Activated CD4-positive, alpha-beta memory T cell treated with anti-CD3 and anti-CD28 coated beads for 36 hours (primary cell): ENCODE measurements at regions of chr19 and their contacts with region 1.

Region 1: DNA sequence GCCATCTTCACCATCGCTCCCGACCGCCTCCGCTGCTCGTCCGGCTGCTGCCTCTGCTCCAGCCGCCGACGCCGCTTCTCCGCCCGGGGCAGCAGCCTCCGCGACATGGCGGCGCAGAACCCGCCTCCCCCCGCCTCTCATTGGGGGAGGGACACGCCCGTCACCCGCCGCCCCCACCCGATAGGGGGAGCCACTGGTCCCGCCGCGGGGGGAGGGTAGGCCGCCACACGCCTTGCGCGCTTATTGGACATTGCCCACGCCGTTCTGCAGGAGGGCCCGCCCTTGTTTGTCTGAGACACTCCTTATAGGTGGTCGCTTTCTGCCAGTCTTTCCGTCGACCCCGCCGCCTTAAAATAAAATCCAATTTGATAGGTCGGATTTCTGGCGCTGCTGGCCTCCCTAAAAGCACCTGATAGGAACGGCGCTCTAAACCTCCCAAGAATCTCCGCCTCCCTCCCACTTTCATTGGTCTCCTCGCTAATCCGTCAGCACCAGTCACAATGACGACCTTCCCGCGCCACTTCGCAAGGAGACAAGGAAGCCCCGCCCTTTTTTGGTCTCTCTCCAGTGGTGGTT is at the start of gene HNRNPL:
- DNase-seq: peak; percentile 99
- H3K4me3 Mint-ChIP-seq: peak within 1 kb of the TSS; percentile 97
- H3K27ac Mint-ChIP-seq: peak within 1 kb of the TSS; percentile 97
- H3K4me1 Mint-ChIP-seq: peaks cover 41% of the 10 kb centered on the region
- H3K27me3 Mint-ChIP-seq: no peaks in the 10 kb centered on the region
- total RNA-seq, gene HNRNPL: 646 to 671 TPM

Region 2: GRCh38 chr19:38647368-38647965 is 202.5 kb before region 1 on chr19 and contains the start of gene ACTN4:
- CTCF ChIA-PET with region 1: no interaction called
- POLR2A ChIA-PET with region 1: no interaction called
- intact Hi-C with region 1: loop called (anchors 2 kb)
- DNase-seq: peak; percentile 100
- H3K4me3 Mint-ChIP-seq: peak within 1 kb of the TSS; percentile 94
- H3K27ac Mint-ChIP-seq: peak within 1 kb of the TSS; percentile 53
- H3K4me1 Mint-ChIP-seq: peaks cover 36% of the 10 kb centered on the region
- H3K27me3 Mint-ChIP-seq: no peaks in the 10 kb centered on the region
- total RNA-seq, gene ACTN4: 267 to 270 TPM

Region 3: GRCh38 chr19:38862321-38863059 is 12.5 kb after region 1 on chr19:
- CTCF ChIA-PET with region 1: interaction called, 3 read pairs
- POLR2A ChIA-PET with region 1: interaction called, 19 read pairs
- intact Hi-C with region 1: loop called (anchors 1 kb)
- DNase-seq: no peak
- H3K4me3 Mint-ChIP-seq: no peak overlapping the region
- H3K27ac Mint-ChIP-seq: no peak overlapping the region
- H3K4me1 Mint-ChIP-seq: peaks cover 34% of the 10 kb centered on the region
- H3K27me3 Mint-ChIP-seq: no peaks in the 10 kb centered on the region

Region 4: DNA sequence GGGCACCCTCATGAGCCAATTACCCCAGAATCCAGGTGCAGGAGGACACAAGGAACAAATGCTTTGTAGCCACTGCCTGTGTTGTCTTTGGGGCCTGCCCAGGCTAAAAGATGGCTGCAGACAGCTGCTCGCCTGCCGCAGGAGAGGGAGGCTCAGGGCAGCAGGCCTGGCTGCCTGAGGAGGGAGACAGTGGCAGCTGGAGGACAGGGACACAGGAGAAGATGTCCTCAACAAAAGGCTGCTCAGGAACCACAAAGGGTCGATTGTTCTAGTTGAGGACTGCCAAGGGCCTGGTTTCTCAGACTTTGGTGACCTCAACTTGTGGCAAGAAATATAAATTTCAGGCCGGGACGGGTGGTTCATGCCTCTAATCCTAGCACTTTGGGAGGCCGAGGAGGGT is 41.8 kb after region 1 on chr19:
- CTCF ChIA-PET with region 1: interaction called, 16 read pairs
- POLR2A ChIA-PET with region 1: interaction called, 4 read pairs
- intact Hi-C with region 1: no loop called
- DNase-seq: no peak
- H3K4me3 Mint-ChIP-seq: no peak overlapping the region
- H3K27ac Mint-ChIP-seq: no peak overlapping the region
- H3K4me1 Mint-ChIP-seq: peaks cover 3% of the 10 kb centered on the region
- H3K27me3 Mint-ChIP-seq: no peaks in the 10 kb centered on the region

Region 5: GRCh38 chr19:39341719-39342604 is 492.0 kb after region 1 on chr19 and contains the start of gene SAMD4B:
- CTCF ChIA-PET with region 1: no interaction called
- POLR2A ChIA-PET with region 1: no interaction called
- intact Hi-C with region 1: loop called (anchors 5 kb)
- DNase-seq: peak; percentile 100
- H3K4me3 Mint-ChIP-seq: peak within 1 kb of the TSS; percentile 98
- H3K27ac Mint-ChIP-seq: peak within 1 kb of the TSS; percentile 91
- H3K4me1 Mint-ChIP-seq: peaks cover 65% of the 10 kb centered on the region
- H3K27me3 Mint-ChIP-seq: no peaks in the 10 kb centered on the region
- total RNA-seq, gene SAMD4B: 49.4 to 51.3 TPM